HEK293 (cell line): ENCODE measurements at regions of chr3 and their contacts with region 1.

Region 1: GRCh38 chr3:49007068-49007770 is at the start of gene WDR6:
- H3K4me3 ChIP-seq: peak within 1 kb of the TSS; percentile 74
- H3K27ac ChIP-seq: peak within 1 kb of the TSS; percentile 93
- H3K4me1 ChIP-seq: no peaks in the 10 kb centered on the region
- CTCF ChIP-seq: peak; percentile 91

Region 2: DNA sequence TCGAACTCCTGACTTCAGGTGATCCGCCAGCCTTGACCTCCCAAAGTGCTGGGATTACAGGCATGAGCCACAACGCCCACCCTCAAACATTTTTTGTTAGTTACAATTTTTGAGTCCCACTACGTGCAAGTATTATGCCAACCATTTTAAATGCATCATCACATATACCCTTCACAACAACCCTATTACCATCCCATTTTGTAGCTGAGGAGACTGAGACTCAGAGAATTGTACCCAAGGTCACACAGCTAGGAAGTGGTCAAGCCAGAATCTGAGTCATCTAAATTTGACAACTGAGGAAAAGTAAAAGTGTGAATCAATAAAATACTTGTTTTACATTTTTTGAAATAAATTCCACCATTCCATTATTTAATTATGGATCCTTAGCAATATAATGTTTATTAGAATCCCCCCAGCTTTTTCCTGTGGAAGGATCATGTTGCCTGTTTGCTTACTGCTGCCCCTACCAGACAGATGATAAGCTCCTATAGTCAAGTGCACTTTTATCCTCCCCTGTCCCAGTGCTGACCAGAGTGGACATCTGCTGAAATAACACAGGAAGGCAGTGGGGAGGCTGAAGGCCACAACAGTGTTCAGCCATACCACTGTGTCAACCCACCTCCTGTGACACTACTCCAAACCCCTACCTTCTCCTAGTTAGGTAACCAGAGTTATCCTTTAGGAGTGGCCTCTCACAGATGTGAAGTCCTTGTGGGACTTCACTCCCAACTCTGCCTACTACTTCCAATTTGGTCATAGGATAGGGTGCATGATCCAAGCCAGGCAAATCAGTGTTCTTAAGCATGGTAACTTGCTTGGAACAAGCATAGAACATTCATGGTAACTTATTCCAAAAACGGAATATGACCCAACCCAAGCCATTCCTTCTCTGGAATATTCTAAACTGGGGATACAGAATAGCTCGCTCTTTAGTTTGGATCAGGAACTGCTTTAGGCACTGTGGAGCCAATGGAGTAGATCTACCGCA is 187.7 kb before region 1 on chr3:
- CTCF ChIA-PET with region 1: no interaction called
- POLR2A ChIA-PET with region 1: no interaction called
- H3K4me3 ChIP-seq: no peak overlapping the region
- H3K27ac ChIP-seq: no peak overlapping the region
- H3K4me1 ChIP-seq: peaks cover 5% of the 10 kb centered on the region; the same call in 1 of the 2 replicates
- CTCF ChIP-seq: no peak

Region 3: GRCh38 chr3:48989796-48990635 is 17.2 kb before region 1 on chr3 and contains the start of gene P4HTM:
- CTCF ChIA-PET with region 1: interaction called, 20 read pairs
- POLR2A ChIA-PET with region 1: interaction called, 61 read pairs
- H3K4me3 ChIP-seq: peak within 1 kb of the TSS; percentile 83
- H3K27ac ChIP-seq: peak within 1 kb of the TSS; percentile 82
- H3K4me1 ChIP-seq: no peaks in the 10 kb centered on the region
- CTCF ChIP-seq: peak; percentile 89

Region 4: DNA sequence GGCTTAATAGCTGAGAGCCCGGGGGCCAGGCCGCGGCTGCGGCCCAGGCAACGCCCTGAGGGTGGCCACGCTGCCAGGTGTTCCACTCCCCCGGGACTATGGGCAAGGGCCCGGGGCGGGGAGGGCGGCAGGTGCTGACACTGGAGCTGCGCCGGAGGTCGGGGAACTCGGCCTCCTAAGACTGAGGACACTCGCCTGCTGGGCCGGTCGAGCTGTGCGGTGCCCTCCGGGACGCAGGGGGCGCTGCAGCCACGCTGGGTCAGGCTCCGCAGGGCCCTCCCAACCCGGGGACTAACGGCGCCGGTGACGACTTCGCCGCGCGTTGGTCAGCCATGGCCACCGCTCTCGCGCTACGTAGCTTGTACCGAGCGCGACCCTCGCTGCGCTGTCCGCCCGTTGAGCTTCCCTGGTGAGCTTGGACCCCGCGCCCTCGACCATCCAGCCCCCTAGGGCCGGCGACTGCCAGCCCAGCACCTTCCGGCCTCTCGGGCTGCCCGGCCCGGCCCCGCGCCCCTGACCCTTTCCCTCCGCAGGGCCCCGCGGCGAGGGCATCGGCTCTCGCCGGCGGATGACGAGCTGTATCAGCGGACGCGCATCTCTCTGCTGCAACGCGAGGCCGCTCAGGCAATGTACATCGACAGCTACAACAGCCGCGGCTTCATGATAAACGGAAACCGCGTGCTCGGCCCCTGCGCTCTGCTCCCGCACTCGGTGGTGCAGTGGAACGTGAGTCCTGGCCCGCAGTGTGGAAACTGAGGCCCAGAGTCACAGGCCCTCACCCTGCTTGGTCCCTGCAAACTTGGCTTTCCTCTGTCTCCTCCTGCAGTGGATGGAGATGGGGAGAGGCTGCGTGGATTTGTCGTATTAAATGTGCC is 14.8 kb after region 1 on chr3 and contains the start of gene NDUFAF3:
- CTCF ChIA-PET with region 1: interaction called, 12 read pairs
- POLR2A ChIA-PET with region 1: interaction called, 141 read pairs
- H3K4me3 ChIP-seq: peak within 1 kb of the TSS; percentile 92
- H3K27ac ChIP-seq: peak within 1 kb of the TSS; percentile 93
- H3K4me1 ChIP-seq: no peaks in the 10 kb centered on the region
- CTCF ChIP-seq: peak; percentile 99

Region 5: GRCh38 chr3:49028673-49029562 is 21.7 kb after region 1 on chr3 and contains the start of gene IMPDH2:
- CTCF ChIA-PET with region 1: interaction called, 5 read pairs
- POLR2A ChIA-PET with region 1: interaction called, 141 read pairs
- H3K4me3 ChIP-seq: peak within 1 kb of the TSS; percentile 83
- H3K27ac ChIP-seq: peak within 1 kb of the TSS; percentile 58
- H3K4me1 ChIP-seq: no peaks in the 10 kb centered on the region
- CTCF ChIP-seq: peak; percentile 48

Region 6: DNA sequence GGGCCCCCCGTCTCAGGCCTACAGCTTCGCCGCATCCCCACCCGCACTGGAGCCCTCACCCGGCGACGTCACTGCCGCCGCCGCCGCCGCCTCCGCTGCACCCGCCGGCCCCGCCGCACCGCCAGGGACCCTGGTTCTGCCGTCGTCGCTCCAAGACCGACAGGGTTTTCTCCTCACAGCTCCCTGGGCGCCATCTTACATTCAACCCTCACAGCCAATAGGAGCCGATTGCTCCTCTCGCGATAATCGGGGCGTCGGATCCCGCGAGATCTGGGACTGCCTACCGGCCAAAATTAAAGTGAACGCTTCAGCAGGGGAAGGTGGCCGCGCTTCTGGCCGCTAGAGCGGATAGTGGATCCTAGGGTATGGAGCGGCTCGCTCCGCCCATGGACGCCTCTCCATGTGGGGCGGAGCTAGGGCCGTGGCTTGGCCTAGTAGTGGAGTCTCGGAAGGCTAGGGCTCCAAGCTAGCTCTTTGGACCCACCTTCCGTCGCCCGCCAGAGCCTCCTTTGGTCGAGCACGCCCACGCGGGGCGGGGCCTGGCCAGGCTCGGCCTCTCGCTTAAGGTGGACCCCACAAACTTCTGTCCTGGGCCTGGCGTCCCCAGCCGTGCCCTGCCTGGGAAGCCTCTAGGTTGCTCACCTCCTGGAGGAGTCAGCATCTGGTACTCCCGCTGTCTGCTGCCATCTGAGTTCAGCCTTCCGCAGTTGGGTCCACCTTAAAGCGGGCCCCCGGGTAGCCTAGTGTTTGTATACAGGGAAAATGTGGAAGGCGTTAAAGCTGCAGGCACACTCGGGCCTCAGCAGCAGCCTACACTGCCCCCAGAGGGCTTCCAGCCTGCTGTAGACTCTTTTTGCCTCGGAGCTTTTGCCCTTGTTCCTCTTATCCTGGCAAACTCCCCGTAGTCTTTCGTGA is 86.9 kb after region 1 on chr3 and contains the start of gene QRICH1:
- CTCF ChIA-PET with region 1: no interaction called
- POLR2A ChIA-PET with region 1: interaction called, 24 read pairs
- H3K4me3 ChIP-seq: peak within 1 kb of the TSS; percentile 93
- H3K27ac ChIP-seq: peak within 1 kb of the TSS; percentile 86
- H3K4me1 ChIP-seq: peaks cover 3% of the 10 kb centered on the region; the same call in 1 of the 2 replicates
- CTCF ChIP-seq: peak; percentile 74

Region 7: DNA sequence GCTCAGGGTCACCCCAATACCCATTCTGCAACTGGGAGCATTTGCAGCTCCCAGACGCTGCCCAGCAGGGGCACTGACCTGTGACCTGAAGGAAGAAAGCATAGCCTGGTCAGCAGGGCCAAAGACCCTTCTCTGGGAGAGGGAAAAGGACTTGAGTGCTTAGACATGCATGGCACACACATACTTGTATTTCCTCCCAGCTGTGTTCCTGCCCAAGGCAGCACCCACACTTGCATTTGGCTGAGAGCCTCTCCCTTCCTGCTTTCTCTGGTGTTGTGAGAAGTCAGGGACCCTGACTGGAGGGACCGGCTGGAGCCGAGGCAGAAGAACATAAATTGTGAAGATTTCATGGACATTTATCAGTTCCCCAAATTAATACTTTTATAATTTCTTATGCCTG is 132.9 kb after region 1 on chr3:
- CTCF ChIA-PET with region 1: no interaction called
- POLR2A ChIA-PET with region 1: no interaction called
- H3K4me3 ChIP-seq: no peak overlapping the region
- H3K27ac ChIP-seq: no peak overlapping the region
- H3K4me1 ChIP-seq: no peaks in the 10 kb centered on the region
- CTCF ChIP-seq: no peak

Region 8: DNA sequence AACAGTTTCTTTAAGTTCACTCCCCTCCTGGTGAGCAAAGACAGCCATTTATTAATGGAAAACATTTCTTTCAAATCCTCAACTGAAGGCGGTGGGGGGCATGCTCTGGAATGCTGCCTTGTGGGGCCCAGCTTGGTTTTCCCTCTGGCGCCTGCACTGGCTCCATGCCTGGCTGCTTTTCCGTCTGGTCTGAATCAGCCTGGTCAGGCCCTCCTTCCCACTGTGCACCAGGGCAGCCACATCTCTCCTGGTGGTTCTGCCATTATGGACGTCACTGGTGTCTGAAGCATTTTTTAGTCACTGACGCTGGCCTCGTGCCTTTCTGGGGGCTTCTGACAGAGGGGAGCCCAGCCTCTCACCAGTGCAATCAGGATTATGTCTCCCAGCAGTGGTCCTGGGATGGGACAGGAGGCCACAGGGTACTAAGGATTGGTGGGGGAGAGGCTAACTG is 609.3 kb after region 1 on chr3:
- CTCF ChIA-PET with region 1: no interaction called
- POLR2A ChIA-PET with region 1: interaction called, 15 read pairs
- H3K4me3 ChIP-seq: no peak overlapping the region
- H3K27ac ChIP-seq: no peak overlapping the region
- H3K4me1 ChIP-seq: no peaks in the 10 kb centered on the region
- CTCF ChIP-seq: no peak